Activated CD8-positive, alpha-beta T cell treated with anti-CD3 and anti-CD28 coated beads, Interleukin-2, amount 10 ng/mL, durations not matched to agents 7 days and 5 days (primary cell): ENCODE measurements at regions of chr4 and their contacts with region 1.

Region 1: GRCh38 chr4:108512615-108513505 is 107.5 kb upstream of the RPL34 start:
- DNase-seq: peak; percentile 69
- ATAC-seq: peak; percentile 94
- H3K4me3 Mint-ChIP-seq: peak overlapping the region; percentile 59
- H3K27ac Mint-ChIP-seq: no peak overlapping the region
- H3K4me1 Mint-ChIP-seq: peaks cover 17% of the 10 kb centered on the region
- H3K27me3 Mint-ChIP-seq: peaks cover 6% of the 10 kb centered on the region

Region 2: GRCh38 chr4:108466936-108467902 is 45.6 kb before region 1 on chr4:
- CTCF ChIA-PET with region 1: interaction called, 12 read pairs
- POLR2A ChIA-PET with region 1: interaction called, 3 read pairs
- DNase-seq: peak; percentile 57
- ATAC-seq: peak; percentile 89
- H3K4me3 Mint-ChIP-seq: peak overlapping the region; percentile 69
- H3K27ac Mint-ChIP-seq: peak overlapping the region; percentile 94
- H3K4me1 Mint-ChIP-seq: peaks cover 38% of the 10 kb centered on the region
- H3K27me3 Mint-ChIP-seq: no peaks in the 10 kb centered on the region